ENCODE measurements at regions of chr15 and their contacts with region 1.

Region 1: DNA sequence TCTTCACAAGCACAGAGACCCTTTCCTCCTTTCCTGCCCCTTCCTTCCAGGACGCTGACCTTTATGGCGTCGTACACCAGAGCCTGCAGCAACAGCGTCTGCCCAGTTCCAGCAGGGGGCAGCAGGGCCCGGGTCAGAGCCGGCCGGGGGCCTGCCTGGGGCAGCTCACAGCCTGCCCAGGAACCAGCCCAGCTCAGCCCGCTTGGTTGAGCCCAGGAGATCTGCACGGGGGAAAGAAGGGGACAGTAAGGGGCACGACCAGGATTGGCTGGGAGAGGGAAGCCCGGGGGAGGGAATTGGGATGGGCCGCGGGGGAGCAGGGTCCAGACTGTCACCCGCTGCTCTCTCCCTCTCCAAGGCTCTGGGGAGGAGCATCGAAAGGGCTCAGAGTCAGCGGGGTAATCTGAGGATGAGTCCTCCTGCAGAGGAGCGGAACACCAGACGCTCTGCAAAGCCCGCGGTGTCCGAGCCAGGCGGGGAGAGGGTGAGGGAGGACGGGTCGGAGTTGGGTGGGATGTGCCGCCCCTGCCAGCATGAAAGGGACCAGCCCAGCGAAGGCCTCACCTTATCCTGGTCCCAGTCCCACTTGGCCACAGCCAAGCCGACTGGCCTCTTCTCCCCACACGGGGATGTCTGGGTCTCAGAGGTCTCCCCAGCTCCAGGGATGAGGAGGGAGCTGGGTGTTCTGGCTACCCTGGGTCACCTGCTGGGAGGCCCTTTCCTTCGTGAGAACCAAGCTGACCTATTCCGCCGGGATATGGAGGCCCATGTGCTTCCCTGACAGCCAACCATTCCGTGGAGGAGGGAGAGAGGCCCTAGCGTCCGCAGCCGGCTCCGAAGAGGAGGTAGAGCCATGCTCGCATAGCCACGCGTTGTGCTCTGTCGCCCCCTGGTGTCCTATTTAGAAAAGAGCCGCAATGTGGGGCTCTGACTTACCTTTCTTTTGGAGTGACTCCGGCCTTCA is 7.4 kb upstream of the IGDCC3 start:
- DNase-seq: peak; percentile 91
- H3K4me3 Mint-ChIP-seq: peak overlapping the region; percentile 61
- H3K27ac Mint-ChIP-seq: no peak overlapping the region
- H3K4me1 Mint-ChIP-seq: peaks cover 7% of the 10 kb centered on the region
- H3K27me3 Mint-ChIP-seq: peaks cover 48% of the 10 kb centered on the region
- CTCF ChIP-seq: peak; percentile 87

Region 2: GRCh38 chr15:65054333-65055200 is 330.6 kb before region 1 on chr15:
- CTCF ChIA-PET with region 1: interaction called, 3 read pairs
- POLR2A ChIA-PET with region 1: no interaction called
- intact Hi-C with region 1: loop called (anchors 10 kb)
- DNase-seq: peak; percentile 63
- H3K4me3 Mint-ChIP-seq: no peak overlapping the region
- H3K27ac Mint-ChIP-seq: no peak overlapping the region
- H3K4me1 Mint-ChIP-seq: peaks cover 4% of the 10 kb centered on the region
- H3K27me3 Mint-ChIP-seq: no peaks in the 10 kb centered on the region
- CTCF ChIP-seq: peak; percentile 83

Region 3: DNA sequence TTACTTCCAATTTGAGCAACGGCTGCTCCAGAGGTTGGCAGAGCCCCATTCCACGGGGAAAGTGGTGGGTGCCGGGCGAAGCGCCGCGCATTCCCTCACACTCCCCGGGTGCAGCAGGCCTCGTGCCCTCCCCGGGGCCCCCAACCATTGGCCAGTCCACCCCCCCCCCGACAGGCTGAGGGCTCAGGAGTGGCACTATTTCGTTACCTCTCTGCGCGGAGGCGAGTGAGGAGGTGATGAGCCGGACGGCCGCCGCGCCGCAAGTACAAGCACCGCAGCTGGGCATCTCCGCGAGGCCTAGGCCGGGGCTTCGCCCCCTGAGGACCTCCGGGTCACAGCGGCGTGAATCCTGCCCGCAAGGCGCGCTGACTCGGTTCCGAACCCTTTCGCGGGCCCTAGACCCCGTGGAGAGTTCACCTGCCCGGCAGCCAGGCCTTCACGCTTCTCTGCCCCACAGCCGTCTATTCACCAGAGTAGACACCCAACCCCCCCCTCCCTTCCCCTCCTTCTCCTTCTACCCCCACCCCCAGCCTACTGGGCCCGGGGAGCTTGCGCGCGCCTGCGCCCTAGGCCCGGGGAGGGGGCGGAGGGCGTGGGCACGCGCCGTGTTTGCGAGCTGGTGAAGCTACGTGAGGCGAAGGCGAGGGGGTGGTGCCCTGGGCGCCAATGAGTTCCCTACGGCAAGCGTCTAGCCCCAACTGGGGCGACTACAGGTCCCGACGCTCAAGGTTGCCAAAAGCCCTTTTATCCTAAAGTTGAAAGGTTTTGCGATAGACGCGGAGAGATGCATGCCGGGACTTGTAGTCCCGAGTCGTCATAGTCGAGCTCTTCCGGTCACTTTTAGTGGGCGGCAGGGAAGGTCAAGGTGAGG is 200.1 kb before region 1 on chr15 and contains the start of gene CLPX:
- CTCF ChIA-PET with region 1: no interaction called
- POLR2A ChIA-PET with region 1: interaction called, 4 read pairs
- intact Hi-C with region 1: loop called (anchors 2 kb)
- DNase-seq: peak; percentile 94
- H3K4me3 Mint-ChIP-seq: peak within 1 kb of the TSS; percentile 94
- H3K27ac Mint-ChIP-seq: peak within 1 kb of the TSS; percentile 96
- H3K4me1 Mint-ChIP-seq: peaks cover 6% of the 10 kb centered on the region
- H3K27me3 Mint-ChIP-seq: no peaks in the 10 kb centered on the region
- CTCF ChIP-seq: no peak
- total RNA-seq, gene CLPX: 47.9 and 48.9 TPM in 2 replicates

Region 4: GRCh38 chr15:65318870-65319356 is 66.3 kb before region 1 on chr15:
- CTCF ChIA-PET with region 1: interaction called, 210 read pairs
- POLR2A ChIA-PET with region 1: interaction called, 3 read pairs
- intact Hi-C with region 1: loop called (anchors 1 kb)
- DNase-seq: peak; percentile 83
- H3K4me3 Mint-ChIP-seq: no peak overlapping the region
- H3K27ac Mint-ChIP-seq: no peak overlapping the region
- H3K4me1 Mint-ChIP-seq: no peaks in the 10 kb centered on the region
- H3K27me3 Mint-ChIP-seq: peaks cover 11% of the 10 kb centered on the region
- CTCF ChIP-seq: peak; percentile 91

Region 5: GRCh38 chr15:65373163-65373651 is 12.0 kb before region 1 on chr15:
- CTCF ChIA-PET with region 1: interaction called, 13 read pairs
- POLR2A ChIA-PET with region 1: interaction called, 4 read pairs
- intact Hi-C with region 1: no loop called
- DNase-seq: no peak
- H3K4me3 Mint-ChIP-seq: no peak overlapping the region
- H3K27ac Mint-ChIP-seq: no peak overlapping the region
- H3K4me1 Mint-ChIP-seq: peaks cover 6% of the 10 kb centered on the region
- H3K27me3 Mint-ChIP-seq: peaks cover 54% of the 10 kb centered on the region
- CTCF ChIP-seq: no peak

Region 6: GRCh38 chr15:65395567-65396185 is 10.5 kb after region 1 on chr15:
- CTCF ChIA-PET with region 1: interaction called, 34 read pairs
- POLR2A ChIA-PET with region 1: no interaction called
- intact Hi-C with region 1: no loop called
- DNase-seq: no peak
- H3K4me3 Mint-ChIP-seq: no peak overlapping the region
- H3K27ac Mint-ChIP-seq: no peak overlapping the region
- H3K4me1 Mint-ChIP-seq: no peaks in the 10 kb centered on the region
- H3K27me3 Mint-ChIP-seq: peaks cover 52% of the 10 kb centered on the region
- CTCF ChIP-seq: no peak

Region 7: GRCh38 chr15:65400760-65401610 is 15.8 kb after region 1 on chr15:
- CTCF ChIA-PET with region 1: interaction called, 34 read pairs
- POLR2A ChIA-PET with region 1: no interaction called
- intact Hi-C with region 1: no loop called
- DNase-seq: peak; percentile 69
- H3K4me3 Mint-ChIP-seq: no peak overlapping the region
- H3K27ac Mint-ChIP-seq: no peak overlapping the region
- H3K4me1 Mint-ChIP-seq: no peaks in the 10 kb centered on the region
- H3K27me3 Mint-ChIP-seq: peaks cover 34% of the 10 kb centered on the region
- CTCF ChIP-seq: peak; percentile 72